Activated CD4-positive, alpha-beta memory T cell treated with anti-CD3 and anti-CD28 coated beads, Interleukin-2, amount 10 ng/mL, durations not matched to agents 7 days and 5 days (primary cell): ENCODE measurements at regions of chr14 and their contacts with region 1.

Region 1: DNA sequence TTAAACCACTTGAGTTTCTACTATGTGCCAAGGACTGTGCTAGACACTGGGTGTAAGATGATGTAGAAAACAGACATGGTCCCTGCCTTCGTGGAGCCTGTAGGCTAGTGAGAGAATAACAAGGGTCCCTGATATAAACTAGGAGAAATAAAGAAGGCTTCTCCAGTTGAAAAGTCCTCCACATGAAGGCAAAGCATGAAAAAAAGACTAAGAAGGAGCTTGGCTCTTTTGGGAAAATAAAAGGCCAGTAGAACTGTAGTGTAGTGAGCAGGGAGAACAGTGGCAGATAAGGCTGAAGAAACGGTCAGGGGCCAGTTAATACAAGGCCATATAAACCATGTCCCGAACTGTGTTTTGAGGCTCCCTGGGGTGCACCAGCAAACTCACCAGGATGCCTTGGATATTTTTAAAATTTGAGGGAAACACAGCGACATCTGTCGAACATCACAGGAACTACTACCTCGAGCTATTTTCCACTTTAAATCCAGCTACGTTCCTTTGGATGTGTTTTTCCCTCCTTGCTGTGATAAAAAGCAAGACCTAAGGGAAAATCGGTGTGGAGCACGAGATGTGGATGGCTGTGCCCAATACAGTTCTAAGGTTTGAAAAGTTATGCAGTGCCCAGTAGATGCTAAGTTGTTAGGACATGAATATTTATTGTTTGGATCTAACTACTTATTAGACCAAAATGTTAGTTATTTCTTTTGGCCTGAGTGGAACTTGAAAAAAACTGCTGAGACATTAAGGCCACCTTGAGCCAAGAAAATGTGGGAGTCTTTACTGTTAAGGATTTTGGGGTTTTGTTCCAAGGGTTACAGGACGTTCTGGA is 8.5 kb upstream of the CFL2 start:
- DNase-seq: peak; percentile 46
- H3K4me3 Mint-ChIP-seq: no peak overlapping the region
- H3K27ac Mint-ChIP-seq: no peak overlapping the region
- H3K4me1 Mint-ChIP-seq: peaks cover 10% of the 10 kb centered on the region
- H3K27me3 Mint-ChIP-seq: peaks cover 7% of the 10 kb centered on the region

Region 2: GRCh38 chr14:34660796-34661195 is 62.1 kb before region 1 on chr14:
- CTCF ChIA-PET with region 1: no interaction called
- POLR2A ChIA-PET with region 1: no interaction called
- DNase-seq: no peak
- H3K4me3 Mint-ChIP-seq: no peak overlapping the region
- H3K27ac Mint-ChIP-seq: no peak overlapping the region
- H3K4me1 Mint-ChIP-seq: peaks cover 12% of the 10 kb centered on the region
- H3K27me3 Mint-ChIP-seq: no peaks in the 10 kb centered on the region

Region 3: GRCh38 chr14:34671716-34672115 is 51.2 kb before region 1 on chr14:
- CTCF ChIA-PET with region 1: interaction called, 35 read pairs
- POLR2A ChIA-PET with region 1: interaction called, 4 read pairs
- DNase-seq: no peak
- H3K4me3 Mint-ChIP-seq: no peak overlapping the region
- H3K27ac Mint-ChIP-seq: no peak overlapping the region
- H3K4me1 Mint-ChIP-seq: peaks cover 8% of the 10 kb centered on the region
- H3K27me3 Mint-ChIP-seq: no peaks in the 10 kb centered on the region

Region 4: GRCh38 chr14:34699873-34700621 is 22.9 kb before region 1 on chr14:
- CTCF ChIA-PET with region 1: interaction called, 37 read pairs
- POLR2A ChIA-PET with region 1: no interaction called
- DNase-seq: no peak
- H3K4me3 Mint-ChIP-seq: no peak overlapping the region
- H3K27ac Mint-ChIP-seq: no peak overlapping the region
- H3K4me1 Mint-ChIP-seq: no peaks in the 10 kb centered on the region
- H3K27me3 Mint-ChIP-seq: no peaks in the 10 kb centered on the region

Region 5: DNA sequence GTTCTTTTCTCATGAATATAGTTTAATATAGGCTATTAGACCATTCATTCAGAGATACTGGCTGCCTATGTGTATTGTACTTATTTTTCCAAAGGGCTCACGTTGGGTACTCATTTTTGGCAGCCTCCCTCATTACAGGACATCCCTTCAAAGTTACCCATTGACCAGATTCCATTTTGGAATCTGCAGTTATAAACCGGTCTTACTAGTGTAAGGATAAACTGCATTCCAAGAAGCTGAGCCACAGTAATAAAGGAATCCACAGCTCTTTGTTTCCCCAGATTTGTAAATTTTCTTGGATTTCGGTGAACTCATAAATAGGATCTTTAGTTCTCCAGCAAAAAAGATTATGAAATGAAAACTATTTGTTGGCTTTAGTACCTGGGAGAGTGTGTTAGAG is 10.3 kb after region 1 on chr14:
- CTCF ChIA-PET with region 1: interaction called, 18 read pairs
- POLR2A ChIA-PET with region 1: no interaction called
- DNase-seq: no peak
- H3K4me3 Mint-ChIP-seq: no peak overlapping the region
- H3K27ac Mint-ChIP-seq: no peak overlapping the region
- H3K4me1 Mint-ChIP-seq: no peaks in the 10 kb centered on the region
- H3K27me3 Mint-ChIP-seq: peaks cover 6% of the 10 kb centered on the region